ENCODE measurements at regions of chr9 and their contacts with region 1.

Region 1: GRCh38 chr9:34701769-34702736 is 7.9 kb downstream of the CCL21 start:
- DNase-seq: peak; percentile 53 to 85 (median 81)
- ATAC-seq: peak; percentile 81
- H3K4me3 ChIP-seq: peak overlapping the region; percentile 46 to 53
- H3K4me3 Mint-ChIP-seq: peak overlapping the region; percentile 77
- H3K27ac ChIP-seq: no peak overlapping the region
- H3K27ac Mint-ChIP-seq: no peak overlapping the region
- H3K4me1 ChIP-seq: peaks cover 8% of the 10 kb centered on the region
- H3K4me1 Mint-ChIP-seq: peaks cover 14% of the 10 kb centered on the region
- H3K27me3 ChIP-seq: no peaks in the 10 kb centered on the region
- H3K27me3 Mint-ChIP-seq: peaks cover 11% of the 10 kb centered on the region
- CTCF ChIP-seq: peak; percentile 98

Region 2: DNA sequence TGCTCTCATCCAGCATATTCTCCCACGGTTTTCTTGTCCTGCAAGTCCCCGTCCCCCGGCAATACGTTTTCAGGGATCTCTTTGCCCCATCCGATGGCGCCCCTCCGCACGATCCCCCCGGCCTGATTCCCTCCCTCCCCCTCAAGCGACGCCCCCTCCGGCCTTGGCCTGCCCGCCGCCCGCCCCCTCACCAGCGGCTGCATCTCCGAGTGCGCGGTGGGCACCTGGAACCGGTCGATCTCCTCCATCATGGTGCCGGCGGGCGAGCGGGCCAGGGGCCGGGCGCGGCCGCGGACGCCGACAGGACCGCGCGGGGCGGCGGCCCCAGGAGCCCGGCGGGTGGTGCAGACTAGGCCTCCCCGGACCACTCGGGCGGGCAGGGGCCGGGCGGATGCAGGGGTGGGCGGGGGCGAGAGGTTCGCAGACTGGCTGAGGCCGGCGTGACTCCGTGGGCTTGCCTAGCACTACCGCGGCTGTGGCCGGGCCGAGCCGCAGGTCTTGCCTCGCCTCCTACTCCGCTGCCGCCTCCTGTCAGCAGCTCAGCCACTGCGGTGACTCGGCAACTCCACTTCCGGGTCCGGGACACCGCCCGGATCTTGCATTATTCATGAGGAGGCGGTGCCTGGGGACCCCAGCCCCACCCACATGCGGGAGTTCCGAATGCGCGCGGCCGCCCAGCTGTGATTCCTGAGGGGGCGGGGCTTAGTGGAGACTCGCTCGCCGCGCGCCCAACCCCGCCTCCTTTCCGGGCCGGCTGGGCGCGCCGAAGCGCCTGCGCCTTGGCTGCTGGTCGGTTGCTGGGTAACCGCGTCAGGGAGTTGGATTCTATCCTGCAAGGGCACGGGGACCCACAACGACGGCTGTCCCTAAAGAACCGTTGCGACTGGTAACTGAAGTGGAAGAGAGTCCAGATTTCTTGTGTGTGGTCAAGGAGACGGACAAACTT is 243.8 kb before region 1 on chr9 and contains the starts of genes DNAI1 and FAM219A:
- CTCF ChIA-PET with region 1: no interaction called
- POLR2A ChIA-PET with region 1: no interaction called
- intact Hi-C with region 1: loop called in 1 of 2 experiments (anchors 1 kb)
- DNase-seq: peak; percentile 98 to 99 (median 99)
- ATAC-seq: peak; percentile 96
- H3K4me3 ChIP-seq: peak within 1 kb of the TSS; percentile 61 to 67
- H3K4me3 Mint-ChIP-seq: peak within 1 kb of the TSS; percentile 91
- H3K27ac ChIP-seq: peak within 1 kb of the TSS in 1 of 2 experiments; percentile 29
- H3K27ac Mint-ChIP-seq: peak within 1 kb of the TSS; percentile 46
- H3K4me1 ChIP-seq: peaks cover 14% of the 10 kb centered on the region
- H3K4me1 Mint-ChIP-seq: peaks cover 30% of the 10 kb centered on the region
- H3K27me3 ChIP-seq: no peaks in the 10 kb centered on the region
- H3K27me3 Mint-ChIP-seq: no peaks in the 10 kb centered on the region
- CTCF ChIP-seq: no peak
- total RNA-seq, gene DNAI1: not detected
- total RNA-seq, gene FAM219A: 5.5 to 5.9 TPM

Region 3: DNA sequence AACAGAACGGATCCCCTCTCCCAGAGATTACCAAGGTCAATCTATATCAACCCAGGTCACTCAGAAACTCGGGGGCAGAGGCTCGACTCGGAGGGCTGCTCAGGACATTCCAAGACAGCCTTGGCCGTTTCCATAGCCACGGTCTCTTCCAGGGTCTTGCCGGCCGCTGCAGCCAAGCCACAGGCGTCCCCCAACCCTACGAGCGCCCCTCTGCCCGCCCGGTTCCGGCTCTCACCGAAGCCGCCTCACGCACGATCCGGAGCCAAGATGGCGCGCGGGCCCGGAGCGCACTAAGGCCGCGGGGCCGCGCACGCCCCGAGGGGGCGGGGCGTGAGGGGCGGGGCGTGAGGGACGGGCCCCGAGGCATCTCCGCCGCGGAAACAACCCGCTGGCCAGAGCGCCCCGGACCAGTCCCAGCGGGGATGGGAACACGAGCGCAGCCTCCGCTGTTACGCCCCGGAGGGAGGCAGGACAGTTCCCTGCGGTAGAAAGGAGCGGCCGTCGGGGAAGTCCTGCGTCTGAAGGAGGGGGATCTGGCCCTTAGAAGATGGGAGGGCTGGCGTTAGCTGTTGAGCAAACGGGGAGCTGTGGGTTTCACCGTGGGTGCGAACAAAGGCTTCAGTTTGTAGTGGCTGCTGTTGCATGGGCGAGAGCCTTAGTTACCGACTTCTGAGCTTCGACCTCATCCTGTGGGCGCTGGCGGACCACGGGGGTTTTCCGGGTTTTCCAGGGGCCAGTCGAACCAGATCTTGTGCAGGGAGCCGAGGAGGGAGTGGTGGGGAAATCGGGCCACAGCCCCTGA is 90.0 kb before region 1 on chr9 and contains the start of gene RPP25L:
- CTCF ChIA-PET with region 1: interaction called, 8 read pairs
- POLR2A ChIA-PET with region 1: no interaction called
- intact Hi-C with region 1: loop called in 1 of 2 experiments (anchors 1 kb)
- DNase-seq: peak; percentile 65 to 92 (median 85)
- ATAC-seq: peak; percentile 95
- H3K4me3 ChIP-seq: peak within 1 kb of the TSS; percentile 88 to 93
- H3K4me3 Mint-ChIP-seq: peak within 1 kb of the TSS; percentile 85
- H3K27ac ChIP-seq: peak within 1 kb of the TSS; percentile 77 to 91
- H3K27ac Mint-ChIP-seq: peak within 1 kb of the TSS; percentile 91
- H3K4me1 ChIP-seq: peaks cover 17% of the 10 kb centered on the region
- H3K4me1 Mint-ChIP-seq: peaks cover 23% of the 10 kb centered on the region
- H3K27me3 ChIP-seq: no peaks in the 10 kb centered on the region
- H3K27me3 Mint-ChIP-seq: no peaks in the 10 kb centered on the region
- CTCF ChIP-seq: no peak
- total RNA-seq, gene RPP25L: 4.4 to 5.1 TPM

Region 4: GRCh38 chr9:34675048-34675714 is 26.9 kb before region 1 on chr9:
- CTCF ChIA-PET with region 1: interaction called, 14 read pairs
- POLR2A ChIA-PET with region 1: no interaction called
- intact Hi-C with region 1: loop called in 1 of 2 experiments (anchors 1 kb)
- DNase-seq: peak in 8 of 9 experiments; percentile 37 to 69 (median 56)
- ATAC-seq: peak; percentile 71
- H3K4me3 ChIP-seq: no peak overlapping the region
- H3K4me3 Mint-ChIP-seq: no peak overlapping the region
- H3K27ac ChIP-seq: no peak overlapping the region
- H3K27ac Mint-ChIP-seq: no peak overlapping the region
- H3K4me1 ChIP-seq: no peaks in the 10 kb centered on the region
- H3K4me1 Mint-ChIP-seq: no peaks in the 10 kb centered on the region
- H3K27me3 ChIP-seq: no peaks in the 10 kb centered on the region
- H3K27me3 Mint-ChIP-seq: no peaks in the 10 kb centered on the region
- CTCF ChIP-seq: peak; percentile 33

Region 5: GRCh38 chr9:34983209-34983608 is 281.2 kb after region 1 on chr9:
- CTCF ChIA-PET with region 1: no interaction called
- POLR2A ChIA-PET with region 1: no interaction called
- intact Hi-C with region 1: loop called in 1 of 2 experiments (anchors 1 kb)
- DNase-seq: peak in 1 of 9 experiments; percentile 47
- ATAC-seq: peak; percentile 14
- H3K4me3 ChIP-seq: no peak overlapping the region
- H3K4me3 Mint-ChIP-seq: peak overlapping the region; percentile 19
- H3K27ac ChIP-seq: no peak overlapping the region
- H3K27ac Mint-ChIP-seq: peak overlapping the region; percentile 85
- H3K4me1 ChIP-seq: peaks cover 56% of the 10 kb centered on the region
- H3K4me1 Mint-ChIP-seq: peaks cover 55% of the 10 kb centered on the region
- H3K27me3 ChIP-seq: no peaks in the 10 kb centered on the region
- H3K27me3 Mint-ChIP-seq: no peaks in the 10 kb centered on the region
- CTCF ChIP-seq: no peak

Measured in CD8-positive, alpha-beta T cell (primary cell).